CD8-positive, alpha-beta T cell (primary cell): ENCODE measurements at regions of chr1 and their contacts with region 1.

Region 1: DNA sequence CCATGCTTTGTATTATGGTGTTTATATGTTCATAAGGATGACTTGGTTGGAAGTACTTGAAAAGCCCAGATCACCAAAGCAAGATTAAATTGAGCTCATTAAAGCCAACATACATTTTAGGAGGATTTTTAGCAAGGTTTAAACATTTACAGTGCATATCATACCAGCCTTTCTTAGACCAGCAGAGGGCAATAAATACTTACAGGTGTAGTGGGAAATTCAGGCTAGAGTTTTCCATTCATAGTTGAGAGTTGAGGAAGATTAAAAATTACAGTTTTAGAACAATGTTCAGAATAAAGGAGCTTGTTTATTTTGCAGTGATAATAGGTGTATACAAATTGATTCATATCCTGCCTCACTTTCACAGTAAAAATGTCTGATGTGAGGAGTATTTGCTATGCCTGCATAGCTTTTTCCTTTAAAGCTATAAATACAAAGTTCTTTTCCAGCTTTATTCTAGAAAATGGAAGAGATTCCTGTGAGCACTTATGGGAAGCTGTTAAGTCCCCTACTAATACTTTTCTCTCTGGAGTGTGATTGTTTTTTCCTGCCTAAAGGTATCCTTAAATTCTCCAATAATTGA is 35.3 kb downstream of the DTL start:
- DNase-seq: peak in 2 of 9 experiments; percentile 60 to 72
- ATAC-seq: peak; percentile 68
- H3K4me3 ChIP-seq: no peak overlapping the region
- H3K4me3 Mint-ChIP-seq: no peak overlapping the region
- H3K27ac ChIP-seq: no peak overlapping the region
- H3K27ac Mint-ChIP-seq: no peak overlapping the region
- H3K4me1 ChIP-seq: no peaks in the 10 kb centered on the region
- H3K4me1 Mint-ChIP-seq: no peaks in the 10 kb centered on the region
- H3K27me3 ChIP-seq: no peaks in the 10 kb centered on the region
- H3K27me3 Mint-ChIP-seq: no peaks in the 10 kb centered on the region
- CTCF ChIP-seq: peak; percentile 71

Region 2: DNA sequence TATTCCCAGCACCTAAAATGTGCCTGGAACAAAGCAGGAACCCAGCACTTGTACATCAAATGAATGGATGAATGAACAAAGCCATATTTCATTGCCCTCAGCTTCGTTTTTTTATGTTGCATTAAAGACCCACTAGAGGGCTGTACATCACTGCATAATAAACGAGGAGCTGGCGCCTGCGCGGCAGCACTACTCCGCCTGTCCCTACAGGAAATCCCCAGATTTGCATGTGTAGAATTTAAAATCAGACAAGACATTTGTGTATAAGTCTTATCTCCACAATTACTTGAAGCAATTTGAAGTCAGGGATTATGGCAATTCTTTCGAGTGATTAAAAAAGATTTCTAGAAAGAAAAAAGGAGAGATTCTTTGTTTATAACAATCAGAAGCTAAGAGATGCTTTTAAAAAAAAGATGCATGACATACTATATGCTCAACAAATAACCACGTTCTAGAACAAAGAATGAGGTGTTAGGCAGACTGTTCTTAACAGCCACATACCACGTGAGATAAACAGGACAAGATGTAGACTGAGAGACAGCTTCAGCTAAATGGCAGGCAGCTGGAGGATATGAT is 390.0 kb before region 1 on chr1:
- CTCF ChIA-PET with region 1: interaction called, 16 read pairs
- POLR2A ChIA-PET with region 1: no interaction called
- intact Hi-C with region 1: loop called (anchors 2 kb)
- DNase-seq: peak; percentile 45 to 93 (median 74)
- ATAC-seq: peak; percentile 93
- H3K4me3 ChIP-seq: no peak overlapping the region
- H3K4me3 Mint-ChIP-seq: no peak overlapping the region
- H3K27ac ChIP-seq: peak overlapping the region; percentile 18 to 85
- H3K27ac Mint-ChIP-seq: peak overlapping the region; percentile 94
- H3K4me1 ChIP-seq: peaks cover 8% of the 10 kb centered on the region
- H3K4me1 Mint-ChIP-seq: peaks cover 19% of the 10 kb centered on the region
- H3K27me3 ChIP-seq: no peaks in the 10 kb centered on the region
- H3K27me3 Mint-ChIP-seq: no peaks in the 10 kb centered on the region
- CTCF ChIP-seq: peak; percentile 88

Region 3: GRCh38 chr1:211935448-211935970 is 135.3 kb before region 1 on chr1:
- CTCF ChIA-PET with region 1: no interaction called
- POLR2A ChIA-PET with region 1: no interaction called
- intact Hi-C with region 1: no loop called
- DNase-seq: peak in 2 of 9 experiments; percentile 17 to 40
- ATAC-seq: no peak
- H3K4me3 ChIP-seq: no peak overlapping the region
- H3K4me3 Mint-ChIP-seq: no peak overlapping the region
- H3K27ac ChIP-seq: no peak overlapping the region
- H3K27ac Mint-ChIP-seq: no peak overlapping the region
- H3K4me1 ChIP-seq: peaks cover 10% of the 10 kb centered on the region
- H3K4me1 Mint-ChIP-seq: peaks cover 23% of the 10 kb centered on the region
- H3K27me3 ChIP-seq: no peaks in the 10 kb centered on the region
- H3K27me3 Mint-ChIP-seq: peaks cover 5% of the 10 kb centered on the region
- CTCF ChIP-seq: no peak

Region 4: GRCh38 chr1:212104586-212105325 is 33.9 kb after region 1 on chr1:
- CTCF ChIA-PET with region 1: interaction called, 10 read pairs
- POLR2A ChIA-PET with region 1: no interaction called
- intact Hi-C with region 1: no loop called
- DNase-seq: no peak
- ATAC-seq: no peak
- H3K4me3 ChIP-seq: no peak overlapping the region
- H3K4me3 Mint-ChIP-seq: no peak overlapping the region
- H3K27ac ChIP-seq: no peak overlapping the region
- H3K27ac Mint-ChIP-seq: no peak overlapping the region
- H3K4me1 ChIP-seq: peaks cover 12% of the 10 kb centered on the region
- H3K4me1 Mint-ChIP-seq: peaks cover 9% of the 10 kb centered on the region
- H3K27me3 ChIP-seq: no peaks in the 10 kb centered on the region
- H3K27me3 Mint-ChIP-seq: no peaks in the 10 kb centered on the region
- CTCF ChIP-seq: no peak

Region 5: DNA sequence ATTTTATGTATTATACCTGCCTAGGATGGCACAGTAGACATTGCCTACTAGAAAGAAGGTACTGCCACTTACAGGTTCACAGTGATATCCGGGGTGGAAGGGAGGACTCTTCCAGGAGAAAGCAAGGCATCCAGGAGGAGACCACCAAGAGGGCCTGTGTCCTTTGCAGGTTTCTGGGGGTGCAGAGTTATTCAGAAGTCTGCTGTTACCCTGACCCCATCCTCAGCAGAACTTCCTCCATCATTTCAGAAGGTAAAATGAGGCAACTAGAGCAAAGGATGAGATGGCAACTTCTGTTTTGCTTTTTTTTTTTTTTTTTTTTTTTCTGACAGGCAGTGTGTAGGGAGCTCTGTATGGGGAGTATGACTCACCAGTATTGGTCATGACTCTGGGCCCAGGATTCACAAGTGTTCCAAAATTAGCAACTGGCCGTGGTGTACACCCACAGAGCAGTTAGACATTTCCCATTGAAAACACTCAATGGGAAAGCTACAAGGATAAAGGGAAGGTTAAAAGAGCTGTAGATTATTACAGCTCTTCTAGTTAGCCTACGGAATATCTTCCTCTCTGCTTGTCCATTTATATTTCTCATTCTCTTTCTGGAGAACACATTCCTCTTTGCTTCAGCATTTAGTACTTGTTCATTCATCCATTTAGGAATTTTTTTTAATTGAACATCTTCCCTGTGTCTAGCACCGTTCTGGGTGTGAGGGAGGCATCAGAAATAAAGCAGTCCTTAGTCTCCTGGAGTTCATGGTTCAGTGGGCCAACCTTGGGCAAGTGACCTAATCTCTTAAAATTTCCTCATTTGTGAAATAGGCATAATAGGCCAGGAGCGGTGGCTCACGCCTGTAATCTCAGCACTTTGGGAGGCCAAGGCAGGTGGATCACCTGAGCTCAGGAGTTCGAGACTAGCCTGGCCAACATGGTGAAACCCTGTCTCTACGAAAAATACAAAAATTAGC is 163.9 kb after region 1 on chr1:
- CTCF ChIA-PET with region 1: no interaction called
- POLR2A ChIA-PET with region 1: no interaction called
- intact Hi-C with region 1: no loop called
- DNase-seq: peak in 3 of 9 experiments; percentile 25 to 48 (median 27)
- ATAC-seq: no peak
- H3K4me3 ChIP-seq: no peak overlapping the region
- H3K4me3 Mint-ChIP-seq: no peak overlapping the region
- H3K27ac ChIP-seq: no peak overlapping the region
- H3K27ac Mint-ChIP-seq: no peak overlapping the region
- H3K4me1 ChIP-seq: peaks cover 3% of the 10 kb centered on the region
- H3K4me1 Mint-ChIP-seq: peaks cover 5% of the 10 kb centered on the region
- H3K27me3 ChIP-seq: no peaks in the 10 kb centered on the region
- H3K27me3 Mint-ChIP-seq: no peaks in the 10 kb centered on the region
- CTCF ChIP-seq: no peak

Region 6: DNA sequence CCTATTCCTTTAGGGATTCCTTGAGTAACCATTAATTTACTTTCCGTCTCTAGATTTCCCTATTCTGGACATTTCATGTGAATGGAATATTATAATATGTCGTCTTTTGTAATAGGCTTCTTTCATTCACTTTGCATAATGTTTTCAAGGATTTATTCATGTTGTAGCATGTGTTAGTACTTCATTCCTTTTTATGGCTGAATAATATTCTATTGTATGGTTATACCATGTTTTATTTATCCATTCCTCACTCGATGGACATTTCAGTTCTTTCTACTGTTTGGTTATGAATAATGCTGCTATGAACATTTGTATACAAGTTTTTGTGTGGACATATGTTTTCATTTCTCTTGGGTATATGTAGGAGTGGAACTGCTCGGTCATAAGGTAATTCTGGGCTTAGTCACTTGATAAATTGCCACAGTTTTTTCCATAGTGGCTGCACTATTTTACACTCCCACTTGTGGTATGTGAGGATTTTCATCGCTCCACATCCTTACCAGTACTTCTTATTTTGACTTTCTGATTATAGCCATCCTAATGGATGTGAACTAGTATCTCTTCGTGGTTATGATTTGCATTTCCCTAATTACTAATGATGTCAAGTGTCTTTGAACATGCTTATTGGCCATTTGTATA is 232.1 kb after region 1 on chr1:
- CTCF ChIA-PET with region 1: interaction called, 3 read pairs
- POLR2A ChIA-PET with region 1: interaction called, 14 read pairs
- intact Hi-C with region 1: no loop called
- DNase-seq: no peak
- ATAC-seq: no peak
- H3K4me3 ChIP-seq: no peak overlapping the region
- H3K4me3 Mint-ChIP-seq: no peak overlapping the region
- H3K27ac ChIP-seq: no peak overlapping the region
- H3K27ac Mint-ChIP-seq: no peak overlapping the region
- H3K4me1 ChIP-seq: peaks cover 3% of the 10 kb centered on the region
- H3K4me1 Mint-ChIP-seq: peaks cover 56% of the 10 kb centered on the region
- H3K27me3 ChIP-seq: no peaks in the 10 kb centered on the region
- H3K27me3 Mint-ChIP-seq: no peaks in the 10 kb centered on the region
- CTCF ChIP-seq: no peak

Region 7: GRCh38 chr1:212375986-212376385 is 305.2 kb after region 1 on chr1:
- CTCF ChIA-PET with region 1: interaction called, 16 read pairs
- POLR2A ChIA-PET with region 1: no interaction called
- intact Hi-C with region 1: no loop called
- DNase-seq: no peak
- ATAC-seq: no peak
- H3K4me3 ChIP-seq: no peak overlapping the region
- H3K4me3 Mint-ChIP-seq: no peak overlapping the region
- H3K27ac ChIP-seq: no peak overlapping the region
- H3K27ac Mint-ChIP-seq: no peak overlapping the region
- H3K4me1 ChIP-seq: peaks cover 4% of the 10 kb centered on the region
- H3K4me1 Mint-ChIP-seq: peaks cover 6% of the 10 kb centered on the region
- H3K27me3 ChIP-seq: no peaks in the 10 kb centered on the region
- H3K27me3 Mint-ChIP-seq: no peaks in the 10 kb centered on the region
- CTCF ChIP-seq: no peak

Region 8: GRCh38 chr1:212545941-212546635 is 475.3 kb after region 1 on chr1:
- CTCF ChIA-PET with region 1: no interaction called
- POLR2A ChIA-PET with region 1: no interaction called
- intact Hi-C with region 1: no loop called
- DNase-seq: peak in 1 of 9 experiments; percentile 26
- ATAC-seq: no peak
- H3K4me3 ChIP-seq: no peak overlapping the region
- H3K4me3 Mint-ChIP-seq: no peak overlapping the region
- H3K27ac ChIP-seq: no peak overlapping the region
- H3K27ac Mint-ChIP-seq: no peak overlapping the region
- H3K4me1 ChIP-seq: no peaks in the 10 kb centered on the region
- H3K4me1 Mint-ChIP-seq: no peaks in the 10 kb centered on the region
- H3K27me3 ChIP-seq: peaks cover 0 to 3% of the 10 kb centered on the region in 2 experiments
- H3K27me3 Mint-ChIP-seq: peaks cover 12% of the 10 kb centered on the region
- CTCF ChIP-seq: no peak